Activated T-helper 1 cell treated with anti-CD3 and anti-CD28 coated beads, Interleukin-12 subunit alpha, Interleukin-12 subunit beta, Interleukin-2, Interleukin-4 antibody, amounts not matched to agents 30 ng/mL and 10 ng/mL and 1 ng/mL, durations not matched to agents 14 hours and 24 hours and 36 hours (primary cell): ENCODE measurements at regions of chr12 and their contacts with region 1.

Region 1: DNA sequence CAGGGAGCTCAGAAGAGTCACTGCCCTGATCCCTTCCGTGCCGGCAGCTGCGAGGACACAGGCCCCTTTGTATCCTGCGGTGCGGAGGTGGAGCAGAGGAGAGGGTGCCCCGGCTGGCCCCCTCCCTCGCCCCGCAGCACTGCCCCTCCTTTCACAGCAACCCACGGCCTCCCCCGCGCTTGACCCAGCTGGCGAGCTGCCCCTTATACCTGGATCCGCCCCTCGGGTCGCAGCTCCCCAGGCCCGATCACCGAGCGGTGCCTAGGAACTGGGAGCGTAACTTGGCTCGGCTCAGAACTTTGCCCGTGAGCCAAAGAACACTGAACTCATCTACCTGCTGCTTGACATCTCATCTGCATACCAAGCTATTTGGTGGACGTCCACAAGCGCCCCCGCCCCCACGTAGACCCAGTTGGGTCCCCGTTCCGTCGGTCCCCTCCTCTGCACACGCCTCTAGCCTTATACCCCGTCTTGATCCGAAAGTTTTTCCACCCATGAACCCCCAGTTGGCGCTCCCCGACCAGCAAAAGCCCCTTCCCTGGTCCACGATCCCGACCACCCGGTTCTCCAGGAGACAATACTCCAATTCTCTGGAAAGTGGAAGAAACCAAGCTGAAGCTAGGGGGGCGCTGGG is 697 bp upstream of the DNAJC14 start:
- DNase-seq: peak; percentile 22
- H3K4me3 Mint-ChIP-seq: peak overlapping the region; percentile 98
- H3K27ac Mint-ChIP-seq: peak overlapping the region; percentile 92
- H3K4me1 Mint-ChIP-seq: peaks cover 37% of the 10 kb centered on the region
- H3K27me3 Mint-ChIP-seq: no peaks in the 10 kb centered on the region

Region 2: GRCh38 chr12:55715833-55716581 is 114.1 kb before region 1 on chr12 and contains the start of gene BLOC1S1:
- intact Hi-C with region 1: no loop called
- DNase-seq: peak; percentile 90
- H3K4me3 Mint-ChIP-seq: peak within 1 kb of the TSS; percentile 91
- H3K27ac Mint-ChIP-seq: peak within 1 kb of the TSS; percentile 93
- H3K4me1 Mint-ChIP-seq: peaks cover 34% of the 10 kb centered on the region
- H3K27me3 Mint-ChIP-seq: peaks cover 16% of the 10 kb centered on the region
- total RNA-seq, gene BLOC1S1: 62.5 and 64.8 TPM in 2 replicates

Region 3: GRCh38 chr12:55899082-55899481 is 69.0 kb after region 1 on chr12:
- intact Hi-C with region 1: loop called (anchors 2 kb)
- DNase-seq: no peak
- H3K4me3 Mint-ChIP-seq: no peak overlapping the region
- H3K27ac Mint-ChIP-seq: peak overlapping the region; percentile 65
- H3K4me1 Mint-ChIP-seq: peaks cover 8% of the 10 kb centered on the region
- H3K27me3 Mint-ChIP-seq: no peaks in the 10 kb centered on the region